Vagina (tissue), 2 donors: ENCODE measurements at regions of chr2 and their contacts with region 1.

Region 1: GRCh38 chr2:170386554-170386953 is 208.6 kb downstream of the MYO3B start:
- DNase-seq: no peak
- H3K4me3 ChIP-seq: no peak overlapping the region
- H3K27ac ChIP-seq: no peak overlapping the region
- H3K4me1 ChIP-seq: no peaks in the 10 kb centered on the region
- H3K27me3 ChIP-seq: no peaks in the 10 kb centered on the region
- CTCF ChIP-seq: no peak
- POLR2A ChIP-seq: no peak

Region 2: GRCh38 chr2:169136885-169137534 is 1249.5 kb before region 1 on chr2:
- intact Hi-C with region 1: loop called (anchors 5 kb)
- DNase-seq: no peak
- H3K4me3 ChIP-seq: no peak overlapping the region
- H3K27ac ChIP-seq: no peak overlapping the region
- H3K4me1 ChIP-seq: no peaks in the 10 kb centered on the region
- H3K27me3 ChIP-seq: no peaks in the 10 kb centered on the region
- CTCF ChIP-seq: no peak
- POLR2A ChIP-seq: no peak

Region 3: DNA sequence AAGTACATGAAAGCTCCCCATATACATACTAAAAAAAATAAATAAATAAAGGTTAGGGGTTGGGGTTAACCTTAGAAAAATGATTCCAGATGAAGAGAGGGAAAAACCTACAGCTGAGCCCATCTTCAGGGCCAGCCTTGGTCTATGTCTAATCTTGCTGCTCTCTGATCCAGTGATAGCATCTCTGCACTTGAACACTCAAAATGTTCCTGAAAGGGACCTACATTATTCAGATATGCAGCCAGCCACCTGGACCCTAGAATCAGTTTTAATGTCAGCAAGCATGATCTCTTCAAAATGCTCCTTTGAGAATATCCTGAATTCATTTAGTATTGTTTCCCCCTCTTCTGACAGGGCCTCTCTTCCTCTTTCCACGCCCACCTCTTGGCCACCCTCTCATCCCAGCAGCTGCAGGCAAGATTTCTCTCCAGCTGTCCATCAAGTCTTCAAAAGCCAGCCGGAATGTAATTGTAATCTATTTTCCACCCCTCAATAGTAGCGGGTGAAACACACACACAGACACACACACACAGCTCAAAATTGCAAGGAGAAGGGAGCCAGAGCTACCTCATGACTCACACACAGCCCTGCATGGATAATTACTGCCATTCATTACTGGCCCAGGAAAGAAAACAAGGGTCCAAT is 73.1 kb before region 1 on chr2:
- intact Hi-C with region 1: no loop called
- DNase-seq: no peak
- H3K4me3 ChIP-seq: no peak overlapping the region
- H3K27ac ChIP-seq: no peak overlapping the region
- H3K4me1 ChIP-seq: no peaks in the 10 kb centered on the region
- H3K27me3 ChIP-seq: no peaks in the 10 kb centered on the region
- CTCF ChIP-seq: no peak
- POLR2A ChIP-seq: no peak

Region 4: DNA sequence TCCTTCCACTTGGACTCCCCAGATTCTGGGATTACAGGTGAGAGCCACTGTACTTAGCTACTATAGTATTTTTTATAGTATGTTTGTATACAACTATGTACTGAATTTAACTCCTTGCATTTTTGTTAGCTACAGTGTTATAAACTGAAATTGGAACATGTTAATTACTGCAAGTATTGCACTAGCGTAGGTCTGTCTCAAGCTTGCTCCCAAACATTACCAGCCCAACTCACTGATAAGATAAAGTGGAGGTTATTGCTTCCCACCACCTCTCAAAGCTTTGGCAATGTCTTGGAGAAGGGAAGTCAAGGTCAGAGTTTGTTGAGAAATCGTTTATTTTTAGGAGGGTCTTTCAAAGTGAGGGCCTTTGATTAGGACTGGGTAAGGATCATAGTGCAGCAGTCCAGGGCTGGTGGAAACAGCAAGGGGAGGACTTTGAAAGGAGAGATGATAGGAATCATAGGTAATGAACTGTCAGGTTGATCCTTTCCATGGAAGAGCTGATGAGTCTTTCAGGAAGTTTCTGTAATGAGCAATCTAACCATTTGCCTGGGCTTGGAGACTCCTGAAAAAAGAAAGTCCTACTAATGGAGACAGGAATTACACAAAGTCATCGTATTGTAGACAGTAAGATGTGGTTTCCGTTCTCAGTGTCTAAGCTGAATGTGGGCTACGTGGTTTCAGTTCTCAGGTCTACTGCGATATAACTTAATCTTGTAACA is 48.5 kb after region 1 on chr2:
- intact Hi-C with region 1: no loop called
- DNase-seq: no peak
- H3K4me3 ChIP-seq: no peak overlapping the region
- H3K27ac ChIP-seq: no peak overlapping the region
- H3K4me1 ChIP-seq: peaks cover 7% of the 10 kb centered on the region
- H3K27me3 ChIP-seq: no peaks in the 10 kb centered on the region
- CTCF ChIP-seq: no peak
- POLR2A ChIP-seq: no peak